Caco-2 (cell line): ENCODE measurements at regions of chr19 and their contacts with region 1.

Region 1: DNA sequence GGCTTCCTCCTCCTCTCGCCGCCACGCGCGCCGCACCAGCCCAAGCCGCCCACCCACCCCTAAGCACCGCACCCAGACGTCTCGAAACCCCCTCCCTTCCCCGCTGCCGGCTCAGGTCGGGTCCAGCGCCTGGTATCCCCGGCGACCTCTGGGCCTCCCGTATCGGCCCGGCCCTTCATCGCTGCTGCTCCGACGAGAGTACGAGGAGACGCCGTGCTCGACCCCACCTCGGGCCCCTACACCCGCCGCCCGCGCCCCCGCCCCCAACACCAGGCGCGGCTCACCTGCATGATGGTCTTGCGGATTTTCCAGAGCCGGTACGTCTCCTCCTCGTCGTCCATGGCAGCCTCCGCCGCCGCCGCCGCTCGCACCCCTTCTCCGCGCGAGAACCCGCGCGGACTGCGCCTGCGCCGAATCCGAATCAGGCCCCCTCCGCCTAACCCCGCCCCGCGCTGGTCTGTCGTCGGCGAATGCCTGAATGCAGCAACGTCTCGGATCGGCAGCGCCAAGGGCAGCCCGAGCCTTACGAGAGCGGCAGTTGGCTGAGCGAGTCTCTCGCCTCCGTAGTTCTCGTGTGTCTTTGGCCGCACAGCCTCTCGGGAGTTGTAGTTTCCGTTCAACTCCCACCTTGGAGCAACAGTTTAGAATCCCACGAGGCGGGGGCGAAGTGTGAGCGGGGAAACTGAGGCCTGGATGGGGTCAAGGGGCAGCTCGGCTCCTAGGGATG is at the start of gene POLR2E:
- DNase-seq: peak; percentile 95 to 97
- H3K4me3 ChIP-seq: peak within 1 kb of the TSS; percentile 99
- H3K4me3 Mint-ChIP-seq: peak within 1 kb of the TSS; percentile 91
- H3K27ac Mint-ChIP-seq: peak within 1 kb of the TSS; percentile 85
- H3K4me1 ChIP-seq: peaks cover 27% of the 10 kb centered on the region
- H3K4me1 Mint-ChIP-seq: peaks cover 17% of the 10 kb centered on the region
- H3K27me3 ChIP-seq: no peaks in the 10 kb centered on the region
- H3K27me3 Mint-ChIP-seq: no peaks in the 10 kb centered on the region
- CTCF ChIP-seq: no peak
- total RNA-seq, gene POLR2E: 264 and 272 TPM in 2 replicates

Region 2: DNA sequence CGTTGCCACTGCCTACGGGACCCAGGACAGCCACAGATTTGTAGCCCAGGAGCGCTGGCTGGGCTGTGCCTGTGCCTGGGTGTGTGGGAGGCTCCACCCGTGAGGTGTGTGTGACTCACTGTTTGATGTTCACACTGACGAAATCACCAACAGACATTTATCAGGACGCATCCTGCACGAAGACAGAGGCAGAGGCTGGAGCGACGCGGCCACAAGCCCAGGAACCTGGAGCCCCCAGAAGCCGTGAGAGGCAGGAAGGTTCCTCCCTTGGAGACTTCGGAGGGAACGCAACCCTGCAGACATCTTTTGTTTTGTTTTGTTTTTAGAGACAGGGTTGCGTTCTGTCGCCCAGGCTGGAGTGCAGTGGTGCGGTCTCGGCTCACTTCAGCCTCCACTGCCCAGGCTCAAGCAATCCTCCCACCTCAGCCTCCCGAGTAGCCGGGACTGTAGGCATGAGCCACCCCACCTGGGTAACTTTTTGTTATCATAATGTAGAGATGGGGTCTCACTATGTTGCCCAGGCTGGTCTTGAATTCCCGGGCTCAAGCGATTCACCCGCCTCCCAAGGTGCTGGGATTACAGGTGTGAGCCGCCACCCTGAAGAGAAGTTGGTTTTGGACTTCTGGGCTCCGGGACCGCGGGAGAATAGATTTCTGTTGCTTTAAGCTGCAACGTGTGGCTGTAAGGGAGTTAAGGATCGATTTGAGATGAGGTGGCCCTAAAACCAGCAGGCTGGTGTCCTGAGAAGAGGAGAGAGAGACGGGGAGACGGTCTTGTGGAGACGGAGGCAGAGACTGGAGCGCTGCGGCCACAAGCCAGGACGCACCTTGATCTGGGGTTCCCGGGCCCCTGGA is 135.9 kb before region 1 on chr19:
- CTCF ChIA-PET with region 1: no interaction called
- POLR2A ChIA-PET with region 1: no interaction called
- intact Hi-C with region 1: no loop called
- DNase-seq: peak in 1 of 2 experiments; percentile 57
- H3K4me3 ChIP-seq: no peak overlapping the region
- H3K4me3 Mint-ChIP-seq: peak overlapping the region; percentile 46
- H3K27ac Mint-ChIP-seq: peak overlapping the region; percentile 78
- H3K4me1 ChIP-seq: peaks cover 91% of the 10 kb centered on the region
- H3K4me1 Mint-ChIP-seq: peaks cover 20% of the 10 kb centered on the region
- H3K27me3 ChIP-seq: no peaks in the 10 kb centered on the region
- H3K27me3 Mint-ChIP-seq: no peaks in the 10 kb centered on the region
- CTCF ChIP-seq: no peak

Region 3: GRCh38 chr19:1045247-1045603 is 49.9 kb before region 1 on chr19:
- CTCF ChIA-PET with region 1: no interaction called
- POLR2A ChIA-PET with region 1: interaction called, 11 read pairs
- intact Hi-C with region 1: no loop called
- DNase-seq: peak; percentile 78 to 88
- H3K4me3 ChIP-seq: no peak overlapping the region
- H3K4me3 Mint-ChIP-seq: no peak overlapping the region
- H3K27ac Mint-ChIP-seq: no peak overlapping the region
- H3K4me1 ChIP-seq: peaks cover 5% of the 10 kb centered on the region
- H3K4me1 Mint-ChIP-seq: no peaks in the 10 kb centered on the region
- H3K27me3 ChIP-seq: no peaks in the 10 kb centered on the region
- H3K27me3 Mint-ChIP-seq: no peaks in the 10 kb centered on the region
- CTCF ChIP-seq: no peak

Region 4: GRCh38 chr19:2578901-2579677 is 1484.0 kb after region 1 on chr19:
- CTCF ChIA-PET with region 1: no interaction called
- POLR2A ChIA-PET with region 1: no interaction called
- intact Hi-C with region 1: no loop called
- DNase-seq: peak; percentile 88 to 89
- H3K4me3 ChIP-seq: peak overlapping the region; percentile 40
- H3K4me3 Mint-ChIP-seq: peak overlapping the region; percentile 70
- H3K27ac Mint-ChIP-seq: peak overlapping the region; percentile 42
- H3K4me1 ChIP-seq: peaks cover 29% of the 10 kb centered on the region
- H3K4me1 Mint-ChIP-seq: no peaks in the 10 kb centered on the region
- H3K27me3 ChIP-seq: no peaks in the 10 kb centered on the region
- H3K27me3 Mint-ChIP-seq: no peaks in the 10 kb centered on the region
- CTCF ChIP-seq: peak; percentile 89 to 94